Activated T-helper 2 cell treated with anti-CD3 and anti-CD28 coated beads, Interferon-gamma antibody, Interleukin-2, Interleukin-4, amounts not matched to agents 10 μg/mL and 5 μg/mL and 100 μg/mL, durations not matched to agents 14 hours and 24 hours and 36 hours (primary cell): ENCODE measurements at regions of chr6 and their contacts with region 1.

Region 1: DNA sequence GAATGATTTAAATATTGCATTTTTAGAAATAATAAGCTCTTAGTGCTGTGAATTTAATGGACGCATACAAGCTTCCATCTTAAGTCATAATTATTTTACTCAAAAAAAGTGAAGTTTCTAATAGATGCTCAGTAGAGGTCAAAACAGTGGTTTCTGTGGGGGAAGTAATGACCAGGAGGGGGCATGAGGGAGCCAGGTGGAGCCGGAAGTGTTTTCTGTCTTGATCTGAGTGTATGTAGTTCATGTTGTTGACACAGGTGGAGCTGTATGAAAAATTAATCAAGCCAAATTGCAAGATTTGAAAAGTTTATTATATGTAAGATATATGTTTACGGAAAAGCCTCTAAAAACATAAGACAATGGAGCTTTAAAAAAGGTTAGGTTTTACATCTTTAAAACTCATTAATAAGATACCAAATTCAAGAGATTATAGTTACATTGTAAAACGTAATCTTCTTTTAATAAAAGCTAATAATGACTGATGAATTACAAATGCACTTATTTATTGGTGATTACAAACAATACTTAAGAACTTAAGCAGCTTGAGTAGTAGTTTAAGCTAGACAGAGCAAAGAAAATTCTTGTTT is 68.0 kb downstream of the PLAGL1 start:
- DNase-seq: peak; percentile 47
- H3K4me3 Mint-ChIP-seq: no peak overlapping the region
- H3K27ac Mint-ChIP-seq: no peak overlapping the region
- H3K4me1 Mint-ChIP-seq: peaks cover 6% of the 10 kb centered on the region
- H3K27me3 Mint-ChIP-seq: peaks cover 3% of the 10 kb centered on the region

Region 2: DNA sequence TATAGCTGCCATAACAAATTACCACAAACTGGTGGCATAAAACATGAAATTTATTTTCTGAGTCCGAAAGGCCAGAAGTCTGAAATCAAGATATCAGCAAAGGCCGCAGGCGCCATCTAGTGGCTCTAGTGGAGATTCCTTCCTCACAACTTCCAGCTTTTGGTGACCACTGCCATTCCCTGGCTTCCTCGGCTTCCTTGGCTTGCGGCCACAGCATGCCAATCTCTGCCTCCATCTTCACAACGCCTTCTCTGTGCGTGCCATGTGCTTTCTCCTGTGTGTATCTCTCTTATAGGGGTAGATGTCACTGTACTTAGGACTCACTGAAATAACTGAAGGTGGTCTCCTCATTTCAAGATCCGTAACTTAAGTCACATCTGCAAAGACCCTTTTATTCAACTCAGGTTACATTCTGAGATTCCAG is 73.4 kb after region 1 on chr6:
- intact Hi-C with region 1: loop called (anchors 1 kb)
- DNase-seq: peak; percentile 32
- H3K4me3 Mint-ChIP-seq: no peak overlapping the region
- H3K27ac Mint-ChIP-seq: no peak overlapping the region
- H3K4me1 Mint-ChIP-seq: peaks cover 4% of the 10 kb centered on the region
- H3K27me3 Mint-ChIP-seq: peaks cover 37% of the 10 kb centered on the region

Region 3: GRCh38 chr6:144075187-144075586 is 135.1 kb after region 1 on chr6:
- intact Hi-C with region 1: no loop called
- DNase-seq: no peak
- H3K4me3 Mint-ChIP-seq: no peak overlapping the region
- H3K27ac Mint-ChIP-seq: no peak overlapping the region
- H3K4me1 Mint-ChIP-seq: peaks cover 4% of the 10 kb centered on the region
- H3K27me3 Mint-ChIP-seq: peaks cover 5% of the 10 kb centered on the region